Activated T-helper 1 cell treated with anti-CD3 and anti-CD28 coated beads, Interleukin-12 subunit alpha, Interleukin-12 subunit beta, Interleukin-2, Interleukin-4 antibody, amounts not matched to agents 30 ng/mL and 10 ng/mL and 1 ng/mL, durations not matched to agents 14 hours and 24 hours and 36 hours (primary cell): ENCODE measurements at regions of chr10 and their contacts with region 1.

Region 1: GRCh38 chr10:91908337-91909116 is 759 bp downstream of the FGFBP3 start:
- DNase-seq: peak; percentile 65
- H3K4me3 Mint-ChIP-seq: peak overlapping the region; percentile 87
- H3K27ac Mint-ChIP-seq: peak overlapping the region; percentile 82
- H3K4me1 Mint-ChIP-seq: peaks cover 29% of the 10 kb centered on the region
- H3K27me3 Mint-ChIP-seq: peaks cover 14% of the 10 kb centered on the region

Region 2: GRCh38 chr10:90879062-90879461 is 1029.5 kb before region 1 on chr10:
- intact Hi-C with region 1: loop called (anchors 1 kb)
- DNase-seq: no peak
- H3K4me3 Mint-ChIP-seq: no peak overlapping the region
- H3K27ac Mint-ChIP-seq: peak overlapping the region; percentile 32
- H3K4me1 Mint-ChIP-seq: peaks cover 18% of the 10 kb centered on the region
- H3K27me3 Mint-ChIP-seq: no peaks in the 10 kb centered on the region

Region 3: GRCh38 chr10:91298224-91298871 is 610.2 kb before region 1 on chr10:
- intact Hi-C with region 1: loop called (anchors 1 kb)
- DNase-seq: peak; percentile 68
- H3K4me3 Mint-ChIP-seq: peak overlapping the region; percentile 62
- H3K27ac Mint-ChIP-seq: no peak overlapping the region
- H3K4me1 Mint-ChIP-seq: peaks cover 9% of the 10 kb centered on the region
- H3K27me3 Mint-ChIP-seq: peaks cover 14% of the 10 kb centered on the region

Region 4: GRCh38 chr10:91632671-91633550 is 275.6 kb before region 1 on chr10 and contains the start of gene PPP1R3C:
- intact Hi-C with region 1: loop called (anchors 1 kb)
- DNase-seq: peak; percentile 46
- H3K4me3 Mint-ChIP-seq: peak within 1 kb of the TSS; percentile 73
- H3K27ac Mint-ChIP-seq: no peak within 1 kb of the TSS
- H3K4me1 Mint-ChIP-seq: no peaks in the 10 kb centered on the region
- H3K27me3 Mint-ChIP-seq: peaks cover 49% of the 10 kb centered on the region
- total RNA-seq, gene PPP1R3C: not detected in 2 replicates

Region 5: DNA sequence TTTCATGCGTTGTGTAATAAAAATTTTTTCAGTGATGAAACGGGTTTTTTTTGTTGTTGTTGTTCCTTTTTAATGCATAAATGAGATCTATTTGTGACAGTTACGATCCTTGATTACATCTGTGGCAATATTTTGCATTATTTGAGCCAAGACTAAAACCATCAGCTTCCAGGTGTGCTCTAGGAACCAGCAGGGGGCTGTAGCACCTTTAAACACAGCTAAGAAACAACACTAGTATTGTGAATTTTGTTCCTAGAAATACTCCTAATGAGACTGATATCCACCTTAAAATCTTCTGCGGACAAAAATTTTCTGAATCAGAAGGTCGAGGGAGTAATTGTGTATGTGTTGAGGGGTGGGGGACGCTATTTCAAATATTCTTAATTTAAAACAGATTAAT is 51.9 kb before region 1 on chr10:
- intact Hi-C with region 1: loop called (anchors 1 kb)
- DNase-seq: no peak
- H3K4me3 Mint-ChIP-seq: no peak overlapping the region
- H3K27ac Mint-ChIP-seq: no peak overlapping the region
- H3K4me1 Mint-ChIP-seq: no peaks in the 10 kb centered on the region
- H3K27me3 Mint-ChIP-seq: no peaks in the 10 kb centered on the region

Region 6: DNA sequence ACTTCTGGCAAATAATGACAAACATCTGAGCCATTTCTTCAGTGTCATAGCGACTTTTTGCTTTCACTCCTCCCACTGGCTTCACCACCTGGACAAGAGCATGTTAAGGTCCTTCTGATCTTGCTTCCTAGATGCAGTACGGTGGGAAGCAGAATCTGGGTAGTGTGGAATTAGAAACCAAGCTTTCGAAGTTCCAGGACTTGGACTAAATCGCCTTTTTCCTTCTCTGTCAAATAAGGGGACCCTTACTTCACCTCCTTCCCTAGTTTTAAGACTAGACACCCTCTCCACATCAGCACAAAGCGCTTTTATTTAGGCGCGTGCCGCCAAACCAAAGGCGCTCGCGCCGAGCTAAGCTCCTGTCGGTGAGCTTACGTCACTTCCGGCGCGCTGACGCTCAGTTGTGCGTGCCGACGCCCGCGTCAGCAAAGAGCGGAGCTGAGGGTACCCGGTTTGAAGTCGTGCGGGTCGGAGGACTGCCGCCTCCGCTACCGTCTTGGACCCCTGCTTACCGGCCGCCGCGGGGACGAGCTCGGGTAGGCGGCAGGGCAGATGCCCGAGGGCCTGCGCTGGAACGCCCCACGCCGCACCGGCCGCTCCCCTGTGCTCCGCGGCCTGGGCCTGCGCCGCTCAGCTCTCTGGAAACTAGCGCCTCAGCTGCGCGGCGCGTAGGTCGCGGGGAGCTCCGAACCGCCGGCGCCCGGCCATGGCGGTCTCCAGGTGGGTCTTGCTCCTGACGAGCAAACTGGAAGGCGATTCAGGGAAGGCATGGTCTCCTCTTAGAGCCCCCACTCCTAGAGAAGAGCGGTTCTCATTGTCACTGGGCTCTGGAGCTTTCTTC is 15.1 kb after region 1 on chr10 and contains the start of gene BTAF1:
- intact Hi-C with region 1: loop called (anchors 1 kb)
- DNase-seq: peak; percentile 89
- H3K4me3 Mint-ChIP-seq: peak within 1 kb of the TSS; percentile 98
- H3K27ac Mint-ChIP-seq: peak within 1 kb of the TSS; percentile 99
- H3K4me1 Mint-ChIP-seq: peaks cover 36% of the 10 kb centered on the region
- H3K27me3 Mint-ChIP-seq: peaks cover 9% of the 10 kb centered on the region
- total RNA-seq, gene BTAF1: 58.8 and 59.2 TPM in 2 replicates